Right cardiac atrium (tissue), 5 donors: ENCODE measurements at regions of chr2 and their contacts with region 1.

Region 1: DNA sequence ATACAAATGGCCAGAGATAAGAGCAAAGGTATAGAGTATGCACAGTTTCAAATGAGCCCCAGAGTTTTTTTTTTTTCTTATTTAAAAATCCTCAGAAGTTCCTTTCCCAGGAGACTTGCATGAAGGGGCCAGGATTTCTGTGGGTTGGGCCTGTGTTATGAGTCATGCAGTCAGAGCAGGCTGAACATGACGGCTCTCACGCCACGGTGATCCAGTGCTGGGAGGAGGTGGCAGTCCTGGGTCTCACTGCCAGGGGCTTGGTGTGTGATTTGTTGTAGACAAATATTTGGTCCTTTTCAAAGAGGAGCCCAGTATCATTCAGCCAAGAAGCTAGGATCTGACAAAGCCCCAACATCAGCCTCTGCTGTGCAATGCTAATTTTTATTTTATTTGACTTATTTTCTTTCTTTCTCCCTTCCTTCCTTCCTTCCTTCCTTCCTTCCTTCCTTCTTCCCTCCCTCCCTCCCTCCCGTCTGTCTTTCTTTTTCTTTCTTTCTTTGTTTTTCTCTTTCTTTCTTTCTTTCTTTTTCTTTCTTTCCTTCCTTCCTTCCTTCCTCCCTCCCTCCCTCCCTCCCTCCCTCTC is 10.4 kb upstream of the KCNE4 start:
- DNase-seq: peak; percentile 86 to 90 (median 88)
- ATAC-seq: peak; percentile 97 to 99
- H3K4me3 ChIP-seq: no peak overlapping the region
- H3K27ac ChIP-seq: no peak overlapping the region
- H3K4me1 ChIP-seq: no peaks in the 10 kb centered on the region
- H3K27me3 ChIP-seq: no peaks in the 10 kb centered on the region

Region 2: GRCh38 chr2:222993920-222994650 is 47.5 kb before region 1 on chr2:
- intact Hi-C with region 1: loop called in 1 of 4 experiments (anchors 10 kb)
- DNase-seq: peak; percentile 85 to 95 (median 89)
- ATAC-seq: peak; percentile 99
- H3K4me3 ChIP-seq: no peak overlapping the region
- H3K27ac ChIP-seq: peak overlapping the region; percentile 97
- H3K4me1 ChIP-seq: no peaks in the 10 kb centered on the region
- H3K27me3 ChIP-seq: no peaks in the 10 kb centered on the region

Region 3: DNA sequence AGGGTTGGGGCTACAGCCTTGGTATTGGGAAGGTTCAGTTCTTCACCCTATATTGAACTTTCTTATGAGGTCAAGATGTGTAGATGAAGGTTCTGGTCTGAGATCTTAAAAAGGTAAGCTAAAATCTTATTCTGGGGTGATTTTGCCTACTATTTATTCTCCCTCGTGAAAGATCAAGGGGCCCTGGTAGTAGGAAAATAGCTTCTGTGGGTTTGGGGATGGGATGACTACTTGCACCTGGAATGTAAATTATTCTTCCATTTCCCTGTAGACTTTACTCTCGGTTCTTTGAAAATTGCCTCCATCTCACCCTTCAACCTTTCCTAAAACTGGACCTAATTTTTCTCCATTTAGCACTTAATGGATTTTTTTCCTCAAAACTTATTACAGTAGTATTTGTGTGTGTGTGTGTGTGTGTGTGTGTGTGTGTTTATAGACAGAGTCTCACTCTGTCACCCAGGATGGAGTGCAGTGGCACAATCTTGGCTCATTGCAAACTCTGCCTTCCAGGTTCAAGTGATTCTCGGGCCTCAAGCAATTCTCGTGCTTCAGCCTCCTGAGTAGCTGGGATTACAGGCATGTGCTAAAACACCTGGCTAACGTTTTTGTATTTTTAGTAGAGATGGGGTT is 1637.1 kb after region 1 on chr2:
- intact Hi-C with region 1: no loop called
- DNase-seq: no peak
- ATAC-seq: no peak
- H3K4me3 ChIP-seq: no peak overlapping the region
- H3K27ac ChIP-seq: no peak overlapping the region
- H3K4me1 ChIP-seq: no peaks in the 10 kb centered on the region
- H3K27me3 ChIP-seq: no peaks in the 10 kb centered on the region